Ascending aorta (tissue), 2 donors: ENCODE measurements at regions of chr16 and their contacts with region 1.

Region 1: DNA sequence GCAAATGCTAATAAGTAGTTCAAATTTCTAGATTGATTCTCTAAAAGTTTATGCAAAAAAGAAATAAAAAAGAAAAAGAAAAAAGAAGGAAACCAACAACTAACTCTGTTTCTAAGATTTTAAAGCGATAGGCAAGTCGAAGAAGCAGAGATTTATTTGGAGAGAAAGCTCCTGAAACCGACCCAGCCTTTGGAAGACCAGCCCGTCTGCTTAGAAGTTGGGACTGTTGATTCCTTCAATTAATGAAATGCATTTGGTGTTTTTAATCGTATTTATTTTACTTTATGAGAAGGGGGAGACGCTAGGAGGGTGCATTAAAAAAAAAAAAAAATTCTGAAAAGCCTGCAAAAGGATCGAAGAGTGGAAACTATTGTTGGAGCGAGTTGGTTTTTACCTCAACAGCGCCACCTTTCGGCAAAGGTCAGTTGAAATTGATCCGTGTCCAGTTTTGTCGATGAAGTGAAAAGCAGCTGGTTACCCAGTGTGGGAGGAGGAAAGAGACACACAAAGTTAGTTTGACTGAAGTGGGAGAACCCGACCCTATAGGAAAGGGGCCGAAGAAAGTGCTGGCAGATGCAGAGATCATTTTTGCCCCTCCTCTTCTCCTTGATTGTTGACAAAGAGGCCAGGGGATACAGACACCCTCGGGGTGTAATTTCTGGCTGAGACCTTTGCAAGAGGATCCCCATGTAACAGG is 1.5 kb upstream of the MAF start:
- DNase-seq: peak in 1 of 2 donors; percentile 88
- H3K4me3 ChIP-seq: peak overlapping the region; percentile 80 to 97
- H3K27ac ChIP-seq: peak overlapping the region; percentile 83 to 94
- H3K4me1 ChIP-seq: peaks cover 0 to 6% of the 10 kb centered on the region in 2 donors
- H3K27me3 ChIP-seq: no peaks in the 10 kb centered on the region
- CTCF ChIP-seq: peak; percentile 59 to 85 (median 67)

Region 2: DNA sequence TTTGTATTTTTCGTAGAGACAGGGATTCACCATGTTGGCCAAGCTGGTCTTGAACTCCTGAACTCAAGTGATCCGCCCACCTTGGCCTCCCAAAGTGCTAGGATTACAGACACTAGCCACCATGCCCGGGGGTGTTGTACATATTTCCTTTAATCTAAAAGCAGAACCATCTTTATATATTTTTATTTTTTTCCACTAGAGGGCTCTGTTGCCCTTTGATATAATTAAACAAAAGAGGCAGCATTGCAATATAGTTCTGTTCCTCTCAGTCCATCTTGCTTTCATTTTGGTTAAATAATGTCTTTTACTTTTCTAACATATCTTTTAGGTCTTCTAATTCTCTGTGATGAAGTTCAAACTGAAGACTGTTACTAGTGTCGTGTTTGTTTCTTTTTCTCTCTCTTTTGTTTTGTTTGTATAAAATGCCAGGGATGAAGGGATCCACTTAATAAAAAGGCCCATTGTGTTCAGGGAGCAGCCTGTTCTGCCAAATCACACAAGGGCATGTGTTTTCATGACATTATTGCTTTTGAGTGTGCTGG is 1479.2 kb before region 1 on chr16:
- intact Hi-C with region 1: loop called (anchors 10 kb)
- DNase-seq: peak in 1 of 2 donors; percentile 69
- H3K4me3 ChIP-seq: peak overlapping the region in 1 of 2 donors; percentile 41
- H3K27ac ChIP-seq: peak overlapping the region in 1 of 2 donors; percentile 42
- H3K4me1 ChIP-seq: peaks cover 0 to 4% of the 10 kb centered on the region in 2 donors
- H3K27me3 ChIP-seq: no peaks in the 10 kb centered on the region
- CTCF ChIP-seq: peak; percentile 43 to 58 (median 44)

Region 3: GRCh38 chr16:78684040-78684611 is 918.0 kb before region 1 on chr16:
- intact Hi-C with region 1: loop called (anchors 5 kb)
- DNase-seq: peak in 1 of 2 donors; percentile 89
- H3K4me3 ChIP-seq: no peak overlapping the region
- H3K27ac ChIP-seq: peak overlapping the region; percentile 57 to 58
- H3K4me1 ChIP-seq: peaks cover 0 to 13% of the 10 kb centered on the region in 2 donors
- H3K27me3 ChIP-seq: no peaks in the 10 kb centered on the region
- CTCF ChIP-seq: no peak

Region 4: GRCh38 chr16:79571065-79571902 is 30.8 kb before region 1 on chr16:
- intact Hi-C with region 1: no loop called
- DNase-seq: no peak
- H3K4me3 ChIP-seq: peak overlapping the region in 1 of 2 donors; percentile 34
- H3K27ac ChIP-seq: no peak overlapping the region
- H3K4me1 ChIP-seq: peaks cover 5 to 11% of the 10 kb centered on the region in 2 donors
- H3K27me3 ChIP-seq: no peaks in the 10 kb centered on the region
- CTCF ChIP-seq: no peak

Region 5: DNA sequence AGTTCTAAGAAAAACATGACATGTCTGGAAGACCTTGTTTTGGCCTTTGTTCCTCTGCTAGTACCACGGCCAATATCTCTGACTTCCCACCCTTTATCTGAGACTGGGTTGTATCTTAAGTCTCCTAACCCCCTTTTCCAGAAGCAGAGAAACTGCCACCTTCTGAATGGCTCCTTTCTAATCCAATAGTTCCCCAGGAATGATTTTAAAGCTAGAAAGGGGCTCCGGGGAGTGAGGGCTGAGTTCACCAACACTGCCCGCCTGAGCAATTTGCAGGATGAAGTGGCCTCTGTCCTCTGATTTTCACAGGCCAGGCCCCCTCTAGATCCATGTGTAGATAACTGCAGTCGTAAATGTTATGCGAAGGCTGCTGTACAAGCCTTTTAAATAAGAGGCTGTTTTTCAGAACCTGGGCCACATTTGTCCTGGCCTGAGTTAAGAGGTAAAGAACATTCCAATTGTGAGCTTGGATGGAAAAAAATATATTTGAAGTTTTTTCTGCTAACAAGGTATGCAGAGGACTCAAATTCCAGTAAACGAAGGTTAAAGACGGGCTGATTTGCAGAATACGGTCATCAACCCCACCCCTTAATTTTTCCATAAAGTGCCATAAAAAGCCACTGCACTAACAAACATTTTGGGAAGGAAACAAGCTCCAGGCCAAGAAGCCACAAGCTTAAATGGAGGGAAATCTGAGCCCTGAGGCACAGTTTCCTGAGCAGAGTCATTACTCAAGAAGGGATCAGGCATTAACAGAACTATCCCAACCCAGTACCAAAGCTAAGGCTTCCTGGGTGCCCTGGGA is 115.5 kb after region 1 on chr16:
- intact Hi-C with region 1: loop called (anchors 2 kb)
- DNase-seq: no peak
- H3K4me3 ChIP-seq: peak overlapping the region in 1 of 2 donors; percentile 0
- H3K27ac ChIP-seq: peak overlapping the region; percentile 82 to 90
- H3K4me1 ChIP-seq: peaks cover 29 to 39% of the 10 kb centered on the region in 2 donors
- H3K27me3 ChIP-seq: no peaks in the 10 kb centered on the region
- CTCF ChIP-seq: no peak

Region 6: GRCh38 chr16:79770244-79771064 is 168.4 kb after region 1 on chr16:
- intact Hi-C with region 1: loop called (anchors 2 kb)
- DNase-seq: peak; percentile 51 to 94
- H3K4me3 ChIP-seq: peak overlapping the region; percentile 64 to 75
- H3K27ac ChIP-seq: peak overlapping the region; percentile 78 to 82
- H3K4me1 ChIP-seq: peaks cover 0 to 22% of the 10 kb centered on the region in 2 donors
- H3K27me3 ChIP-seq: no peaks in the 10 kb centered on the region
- CTCF ChIP-seq: no peak